GM12878 (cell line): ENCODE measurements at regions of chr16 and their contacts with region 1.

Region 1: DNA sequence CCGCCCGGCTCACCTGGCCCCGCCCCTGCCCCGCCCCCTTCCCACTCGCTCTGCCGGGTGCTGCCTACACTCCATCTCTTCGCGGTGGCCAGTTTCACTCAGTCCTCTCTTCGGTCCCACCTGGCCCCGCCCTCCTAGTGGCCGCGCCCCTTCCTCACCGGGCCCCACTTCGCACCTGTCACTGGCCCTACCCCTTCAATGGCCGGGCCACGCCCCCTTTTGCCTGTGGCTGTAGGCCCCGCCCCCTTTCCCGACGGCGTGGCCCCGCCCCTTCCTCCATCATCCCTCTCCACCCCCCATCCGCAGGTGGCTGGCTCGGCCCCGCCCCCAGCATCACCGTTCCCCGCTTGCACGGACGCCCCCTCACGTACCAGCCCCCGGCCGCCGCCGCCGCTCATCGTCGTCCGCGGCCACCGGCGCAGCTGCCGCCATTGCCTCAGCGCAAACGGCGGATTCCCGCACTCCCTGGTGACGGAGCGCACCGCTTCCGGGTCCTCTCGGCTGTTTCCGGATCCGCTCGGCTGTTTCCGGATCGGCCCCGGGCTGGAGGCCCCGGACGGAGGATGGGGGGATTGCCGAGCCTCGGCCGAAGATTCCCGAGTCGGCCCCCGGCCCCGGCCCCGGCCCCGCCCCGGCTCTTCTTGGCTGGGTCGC is at the start of gene RABEP2:
- DNase-seq: no peak
- ATAC-seq: peak; percentile 83
- H3K4me3 ChIP-seq: peak within 1 kb of the TSS; percentile 92
- H3K27ac ChIP-seq: peak within 1 kb of the TSS; percentile 99
- H3K4me1 ChIP-seq: peaks cover 14% of the 10 kb centered on the region
- H3K27me3 ChIP-seq: no peaks in the 10 kb centered on the region
- CTCF ChIP-seq: no peak
- EP300 ChIP-seq: no peak
- POLR2A ChIP-seq: peak; percentile 70
- RAD21 ChIP-seq: no peak
- polyA plus RNA-seq, gene RABEP2: 0.47 to 0.69 TPM

Region 2: DNA sequence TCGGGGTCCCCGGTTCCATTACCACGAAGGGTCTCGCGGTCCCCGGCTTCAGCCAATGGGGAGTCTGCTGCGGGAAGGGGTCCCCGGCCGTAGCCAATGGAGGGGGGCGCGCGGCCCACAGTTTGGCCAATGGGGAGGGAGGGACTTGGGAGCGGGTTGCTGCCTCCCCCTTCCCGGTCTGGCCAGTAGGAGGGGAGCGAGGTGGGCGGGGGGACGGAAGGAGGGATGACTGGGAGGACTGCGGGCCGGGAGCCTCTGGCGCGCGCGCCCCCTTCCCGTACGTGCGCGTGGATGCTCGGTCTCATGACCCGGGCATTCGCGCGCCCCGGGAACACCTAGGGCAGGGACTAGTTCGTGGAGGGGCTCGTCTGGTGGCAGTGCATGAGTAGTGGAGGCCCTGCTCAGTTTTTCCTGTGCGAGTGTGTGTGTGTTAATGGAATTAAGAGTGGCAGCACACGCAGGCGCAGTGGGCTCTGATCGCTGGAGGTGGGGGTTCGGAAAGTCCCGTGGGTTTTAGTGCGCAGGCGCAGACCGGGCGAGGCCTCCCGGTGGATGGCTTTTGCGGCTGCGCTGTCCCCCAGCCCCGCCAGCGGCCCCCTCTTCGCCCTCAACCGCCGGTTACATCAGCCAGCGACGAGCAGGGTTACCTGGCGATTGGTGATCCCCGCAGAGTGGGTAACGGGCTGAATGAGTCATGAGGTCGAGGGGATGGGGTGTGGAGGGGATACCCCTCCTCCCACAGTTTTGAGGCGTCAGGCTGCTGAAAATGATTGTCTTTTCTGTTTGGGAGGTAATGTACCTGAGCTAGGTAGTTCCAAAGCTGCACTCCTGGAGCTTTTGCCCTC is 100.8 kb before region 1 on chr16:
- CTCF ChIA-PET with region 1: interaction called, 3 read pairs
- POLR2A ChIA-PET with region 1: interaction called, 13 read pairs
- RAD21 ChIA-PET with region 1: interaction called, 6 read pairs
- SMC1A ChIA-PET with region 1: no interaction called
- in situ Hi-C with region 1: no loop called
- intact Hi-C with region 1: loop called (anchors 2 kb)
- DNase-seq: peak; percentile 86
- ATAC-seq: peak; percentile 90
- H3K4me3 ChIP-seq: peak overlapping the region; percentile 73
- H3K27ac ChIP-seq: peak overlapping the region; percentile 97
- H3K4me1 ChIP-seq: peaks cover 8% of the 10 kb centered on the region; the same call in 1 of the 2 replicates
- H3K27me3 ChIP-seq: no peaks in the 10 kb centered on the region
- CTCF ChIP-seq: 0 out of 6 replicates have a peak, but pooled peaks of 1 of the 3 experiments have one; percentile 13
- EP300 ChIP-seq: no peak
- POLR2A ChIP-seq: peak; percentile 66
- RAD21 ChIP-seq: no peak

Region 3: DNA sequence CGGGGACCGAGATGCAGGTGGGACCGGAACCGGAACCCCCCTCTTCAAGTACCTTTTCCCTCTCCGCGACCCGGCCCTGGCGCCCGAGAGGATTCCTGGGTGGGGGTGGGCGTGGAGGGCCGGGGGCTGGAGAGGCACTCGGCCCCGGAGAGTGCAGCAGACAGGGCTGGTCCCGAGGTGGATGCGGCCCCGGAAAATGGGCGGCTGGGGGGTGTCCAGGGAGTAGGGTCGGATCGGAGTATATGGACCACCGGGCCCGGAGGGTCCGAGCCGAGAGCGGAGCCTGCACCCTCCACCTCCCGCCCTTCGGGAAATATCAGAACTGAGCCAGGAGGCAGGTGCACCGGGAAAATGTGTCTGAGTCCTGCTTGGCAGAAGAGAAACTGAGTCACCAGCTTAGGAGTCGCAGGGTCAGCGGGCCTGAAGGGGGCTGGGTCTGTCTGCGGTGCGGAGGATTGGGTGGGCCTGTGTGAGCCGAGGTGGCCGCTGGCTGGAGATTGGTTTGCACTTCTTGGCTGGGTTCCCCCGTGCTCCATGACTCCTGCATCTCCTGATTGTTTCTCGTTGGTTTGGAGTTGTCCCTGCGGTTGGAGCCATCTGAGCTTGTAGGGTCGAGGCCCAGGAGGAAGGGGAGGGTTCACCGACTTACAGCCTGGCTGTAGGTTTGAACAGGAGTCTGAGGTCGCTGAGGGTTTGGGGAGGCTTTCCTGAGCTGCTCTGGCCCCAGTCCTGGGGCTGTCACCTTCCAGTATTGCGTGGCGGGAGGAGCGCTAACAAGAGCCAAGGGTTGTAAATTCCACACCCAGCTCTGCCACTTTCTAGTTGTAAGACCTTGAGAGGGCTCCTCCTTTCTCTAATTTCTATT is 60.7 kb before region 1 on chr16:
- CTCF ChIA-PET with region 1: interaction called, 6 read pairs
- POLR2A ChIA-PET with region 1: interaction called, 25 read pairs
- RAD21 ChIA-PET with region 1: interaction called, 12 read pairs
- SMC1A ChIA-PET with region 1: interaction called, 9 read pairs
- in situ Hi-C with region 1: no loop called
- intact Hi-C with region 1: no loop called
- DNase-seq: no peak
- ATAC-seq: peak; percentile 19
- H3K4me3 ChIP-seq: peak overlapping the region; percentile 78
- H3K27ac ChIP-seq: peak overlapping the region; percentile 99
- H3K4me1 ChIP-seq: peaks cover 10% of the 10 kb centered on the region
- H3K27me3 ChIP-seq: no peaks in the 10 kb centered on the region
- CTCF ChIP-seq: no peak
- EP300 ChIP-seq: no peak
- POLR2A ChIP-seq: no peak
- RAD21 ChIP-seq: no peak

Region 4: GRCh38 chr16:28935924-28936783 is 11.3 kb after region 1 on chr16:
- CTCF ChIA-PET with region 1: interaction called, 136 read pairs
- POLR2A ChIA-PET with region 1: interaction called, 39 read pairs
- RAD21 ChIA-PET with region 1: interaction called, 46 read pairs
- SMC1A ChIA-PET with region 1: interaction called, 45 read pairs
- in situ Hi-C with region 1: no loop called
- intact Hi-C with region 1: no loop called
- DNase-seq: no peak
- ATAC-seq: peak; percentile 89
- H3K4me3 ChIP-seq: no peak overlapping the region
- H3K27ac ChIP-seq: no peak overlapping the region
- H3K4me1 ChIP-seq: peaks cover 9% of the 10 kb centered on the region
- H3K27me3 ChIP-seq: no peaks in the 10 kb centered on the region
- CTCF ChIP-seq: no peak
- EP300 ChIP-seq: no peak
- POLR2A ChIP-seq: no peak
- RAD21 ChIP-seq: no peak

Region 5: DNA sequence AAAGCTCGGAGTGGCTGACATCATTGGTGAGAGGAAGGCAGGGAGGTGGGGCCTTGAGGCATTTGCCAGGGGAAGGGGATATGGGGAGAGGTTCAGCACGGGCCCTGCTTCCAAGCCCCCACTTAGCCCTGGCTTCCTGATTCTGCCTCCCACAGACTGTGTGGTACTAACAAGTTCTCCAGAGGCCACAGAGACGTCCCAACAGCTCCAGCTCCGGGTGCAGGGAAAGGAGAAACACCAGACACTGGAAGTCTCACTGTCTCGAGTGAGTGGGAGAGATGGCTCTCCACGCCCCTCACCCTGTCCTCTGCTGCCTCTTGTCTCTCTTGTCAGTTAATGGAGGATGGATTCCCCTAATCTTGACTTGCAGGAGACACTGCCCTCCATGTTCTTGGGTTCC is 34.0 kb after region 1 on chr16:
- CTCF ChIA-PET with region 1: no interaction called
- POLR2A ChIA-PET with region 1: no interaction called
- RAD21 ChIA-PET with region 1: no interaction called
- SMC1A ChIA-PET with region 1: no interaction called
- in situ Hi-C with region 1: no loop called
- intact Hi-C with region 1: no loop called
- DNase-seq: no peak
- ATAC-seq: no peak
- H3K4me3 ChIP-seq: no peak overlapping the region
- H3K27ac ChIP-seq: no peak overlapping the region
- H3K4me1 ChIP-seq: no peaks in the 10 kb centered on the region
- H3K27me3 ChIP-seq: no peaks in the 10 kb centered on the region
- CTCF ChIP-seq: no peak
- EP300 ChIP-seq: no peak
- POLR2A ChIP-seq: no peak
- RAD21 ChIP-seq: no peak

Region 6: GRCh38 chr16:29007730-29008593 is 83.1 kb after region 1 on chr16:
- CTCF ChIA-PET with region 1: no interaction called
- POLR2A ChIA-PET with region 1: no interaction called
- RAD21 ChIA-PET with region 1: no interaction called
- SMC1A ChIA-PET with region 1: no interaction called
- in situ Hi-C with region 1: no loop called
- intact Hi-C with region 1: no loop called
- DNase-seq: no peak
- ATAC-seq: peak; percentile 83
- H3K4me3 ChIP-seq: no peak overlapping the region
- H3K27ac ChIP-seq: no peak overlapping the region
- H3K4me1 ChIP-seq: no peaks in the 10 kb centered on the region
- H3K27me3 ChIP-seq: no peaks in the 10 kb centered on the region
- CTCF ChIP-seq: no peak
- EP300 ChIP-seq: no peak
- POLR2A ChIP-seq: no peak
- RAD21 ChIP-seq: no peak

Region 7: DNA sequence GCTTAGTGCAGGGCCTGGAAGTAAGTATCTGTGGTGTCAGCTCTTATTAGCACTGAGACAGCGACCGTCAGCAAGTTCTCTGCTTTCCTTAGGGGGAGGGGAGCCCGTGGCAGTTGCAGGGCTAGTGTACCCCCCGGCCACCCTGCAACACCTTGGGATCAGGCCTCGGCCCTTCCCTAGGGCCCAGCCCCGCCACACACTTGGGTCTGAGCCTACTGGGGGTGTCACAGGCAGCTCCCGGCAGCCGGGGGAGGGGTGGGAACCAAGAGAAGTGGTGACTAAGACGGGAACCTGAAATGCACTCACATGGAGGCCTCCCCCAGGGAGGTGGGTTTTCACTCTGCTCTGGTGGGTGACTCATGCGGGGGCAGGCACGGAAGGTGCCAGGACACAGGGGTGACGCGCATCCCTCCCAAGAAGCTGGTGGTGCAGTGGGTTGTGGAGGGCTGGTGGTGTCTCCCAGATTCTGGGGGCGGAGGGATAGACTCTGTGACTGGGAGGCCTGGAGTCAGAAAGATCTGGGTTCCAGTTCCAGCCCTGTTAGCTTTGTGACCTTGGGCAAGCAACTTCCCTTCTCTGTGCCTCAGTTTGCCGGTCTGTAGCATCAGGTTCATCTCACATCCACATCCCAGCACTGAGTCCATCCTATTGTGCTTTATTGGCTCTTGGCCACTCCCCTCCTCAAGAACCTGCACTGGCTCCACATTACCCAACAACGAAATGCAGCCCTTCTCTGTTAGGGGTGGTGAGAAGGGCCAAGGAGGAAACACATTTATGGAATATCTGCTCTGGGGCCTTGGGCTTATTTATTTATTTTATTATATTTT is 104.5 kb after region 1 on chr16:
- CTCF ChIA-PET with region 1: no interaction called
- POLR2A ChIA-PET with region 1: no interaction called
- RAD21 ChIA-PET with region 1: no interaction called
- SMC1A ChIA-PET with region 1: no interaction called
- in situ Hi-C with region 1: no loop called
- intact Hi-C with region 1: no loop called
- DNase-seq: no peak
- ATAC-seq: peak; percentile 92
- H3K4me3 ChIP-seq: no peak overlapping the region
- H3K27ac ChIP-seq: no peak overlapping the region
- H3K4me1 ChIP-seq: peaks cover 14% of the 10 kb centered on the region
- H3K27me3 ChIP-seq: peaks cover 0 to 3% of the 10 kb centered on the region in 2 experiments; a peak in 1 of 4 replicates
- CTCF ChIP-seq: no peak
- EP300 ChIP-seq: peak; percentile 11 to 45; a peak in 2 of 4 replicates
- POLR2A ChIP-seq: no peak
- RAD21 ChIP-seq: no peak